AG04449 (cell line): ENCODE measurements at regions of chr17 and their contacts with region 1.

Region 1: GRCh38 chr17:28335201-28335955 is at the starts of genes IFT20 and TNFAIP1:
- DNase-seq: peak; percentile 100
- H3K4me3 ChIP-seq: peak within 1 kb of the TSS; percentile 83
- CTCF ChIP-seq: peak; percentile 4

Region 2: DNA sequence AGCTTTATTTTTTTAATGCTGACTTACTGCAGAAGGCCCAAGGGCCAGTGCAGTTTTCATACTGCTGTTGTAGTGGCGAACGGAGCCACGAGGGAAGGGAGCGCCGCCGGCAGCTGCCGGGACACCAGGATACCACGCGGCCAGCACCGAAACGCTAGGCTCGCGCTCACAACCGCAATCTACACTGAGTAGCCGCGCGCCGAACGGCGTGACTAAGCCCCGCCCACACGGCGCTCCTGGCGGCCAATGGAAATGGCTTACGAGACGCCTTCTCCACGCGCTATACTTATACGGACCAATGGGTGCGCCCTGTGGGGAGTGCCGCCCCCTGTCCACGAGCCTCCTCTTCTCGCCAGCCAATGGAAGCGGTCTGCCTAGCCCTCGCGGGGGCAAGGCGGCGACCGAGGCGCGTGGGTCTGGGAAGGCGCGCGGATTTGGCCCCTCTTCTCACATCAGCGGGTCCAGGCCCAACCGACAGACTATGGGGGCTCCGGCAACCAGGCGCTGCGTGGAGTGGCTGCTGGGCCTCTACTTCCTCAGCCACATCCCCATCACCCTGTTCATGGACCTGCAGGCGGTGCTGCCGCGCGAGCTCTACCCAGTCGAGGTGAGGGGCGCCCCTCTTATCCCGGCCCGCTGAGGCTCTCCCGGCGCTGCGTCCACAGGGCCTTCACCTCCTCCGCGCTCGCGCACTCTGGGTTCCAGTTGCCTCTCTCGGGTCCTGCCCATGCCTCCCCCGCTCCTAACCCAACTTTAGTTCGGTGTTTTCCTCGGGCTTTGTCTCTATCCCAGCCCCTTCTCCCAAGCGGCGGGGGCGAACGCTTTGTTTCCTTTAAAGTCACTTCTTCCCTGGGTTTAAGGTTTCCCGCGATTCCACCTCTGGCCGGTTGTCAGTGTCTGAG is 16.4 kb before region 1 on chr17 and contains the start of gene TMEM97:
- CTCF ChIA-PET with region 1: interaction called, 14 read pairs
- POLR2A ChIA-PET with region 1: interaction called, 3 read pairs
- DNase-seq: peak; percentile 78
- H3K4me3 ChIP-seq: peak within 1 kb of the TSS; percentile 82
- CTCF ChIP-seq: peak; percentile 9

Region 3: DNA sequence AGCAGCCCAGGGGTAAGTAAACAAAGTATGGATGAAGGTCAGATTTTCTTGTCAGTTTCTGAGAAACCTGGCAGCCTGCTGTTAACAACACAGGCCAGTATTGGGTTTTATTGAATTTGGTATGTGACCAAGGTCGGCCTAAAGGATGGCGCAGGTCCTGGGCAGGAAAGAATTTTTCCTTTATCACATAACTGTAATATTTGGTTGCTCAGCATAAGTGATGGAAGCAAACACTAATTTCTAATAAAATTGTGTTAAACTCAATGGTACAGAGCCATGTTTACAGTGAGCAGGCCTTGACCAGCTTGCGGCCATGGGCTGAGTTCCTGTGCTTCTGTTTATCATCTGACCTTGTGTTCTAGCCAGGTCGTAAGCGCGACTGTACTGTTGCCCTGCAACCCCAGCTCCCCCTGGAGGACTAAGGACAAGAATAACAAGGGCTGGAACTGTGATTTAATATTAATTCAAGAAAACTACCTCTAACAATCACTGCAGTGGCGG is 11.4 kb after region 1 on chr17:
- CTCF ChIA-PET with region 1: interaction called, 14 read pairs
- POLR2A ChIA-PET with region 1: interaction called, 55 read pairs
- DNase-seq: no peak
- H3K4me3 ChIP-seq: no peak overlapping the region
- CTCF ChIP-seq: peak; percentile 20

Region 4: DNA sequence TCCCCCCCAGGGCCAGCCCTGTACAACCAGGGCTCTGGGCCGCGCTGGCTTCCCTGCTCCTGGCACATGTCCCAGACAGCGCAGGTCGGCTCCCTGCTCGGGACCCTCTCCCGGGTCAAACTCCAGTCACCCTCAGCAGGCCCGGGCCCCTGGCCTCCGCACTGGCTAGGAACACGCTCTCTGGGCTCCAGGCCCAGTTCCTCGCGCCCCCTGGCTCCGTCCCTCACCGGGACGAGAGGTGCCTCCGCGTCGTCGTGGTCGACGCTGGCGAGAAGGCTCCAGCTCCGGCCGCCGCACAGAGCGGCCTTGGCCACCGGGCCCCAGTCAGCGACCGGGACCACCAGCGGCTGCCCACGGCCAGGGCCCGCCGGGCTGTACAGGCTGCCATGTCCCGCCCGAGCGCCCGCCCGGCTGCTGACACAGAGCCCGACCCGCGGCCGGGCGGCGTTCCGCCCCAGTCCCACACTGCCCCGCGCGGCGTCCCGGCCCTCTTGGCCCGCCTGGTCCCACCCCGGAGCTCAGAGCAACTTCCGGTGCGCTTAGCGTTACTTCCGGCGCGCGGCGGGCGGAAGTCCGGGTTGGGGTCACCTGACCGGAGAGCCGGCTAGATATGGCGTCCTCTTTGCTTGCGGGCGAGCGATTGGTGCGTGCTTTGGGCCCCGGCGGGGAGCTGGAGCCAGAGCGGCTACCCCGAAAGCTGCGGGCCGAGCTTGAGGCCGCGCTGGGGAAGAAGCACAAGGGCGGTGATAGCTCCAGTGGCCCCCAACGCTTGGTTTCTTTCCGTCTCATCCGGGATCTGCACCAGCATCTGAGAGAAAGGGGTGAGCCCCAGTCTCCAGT is 21.9 kb after region 1 on chr17 and contains the start of gene POLDIP2:
- CTCF ChIA-PET with region 1: interaction called, 7 read pairs
- POLR2A ChIA-PET with region 1: interaction called, 26 read pairs
- DNase-seq: peak; percentile 51
- H3K4me3 ChIP-seq: peak within 1 kb of the TSS; percentile 95
- CTCF ChIP-seq: no peak

Region 5: GRCh38 chr17:28407130-28407973 is 72.0 kb after region 1 on chr17:
- CTCF ChIA-PET with region 1: no interaction called
- POLR2A ChIA-PET with region 1: no interaction called
- DNase-seq: no peak
- H3K4me3 ChIP-seq: no peak overlapping the region
- CTCF ChIP-seq: no peak

Region 6: DNA sequence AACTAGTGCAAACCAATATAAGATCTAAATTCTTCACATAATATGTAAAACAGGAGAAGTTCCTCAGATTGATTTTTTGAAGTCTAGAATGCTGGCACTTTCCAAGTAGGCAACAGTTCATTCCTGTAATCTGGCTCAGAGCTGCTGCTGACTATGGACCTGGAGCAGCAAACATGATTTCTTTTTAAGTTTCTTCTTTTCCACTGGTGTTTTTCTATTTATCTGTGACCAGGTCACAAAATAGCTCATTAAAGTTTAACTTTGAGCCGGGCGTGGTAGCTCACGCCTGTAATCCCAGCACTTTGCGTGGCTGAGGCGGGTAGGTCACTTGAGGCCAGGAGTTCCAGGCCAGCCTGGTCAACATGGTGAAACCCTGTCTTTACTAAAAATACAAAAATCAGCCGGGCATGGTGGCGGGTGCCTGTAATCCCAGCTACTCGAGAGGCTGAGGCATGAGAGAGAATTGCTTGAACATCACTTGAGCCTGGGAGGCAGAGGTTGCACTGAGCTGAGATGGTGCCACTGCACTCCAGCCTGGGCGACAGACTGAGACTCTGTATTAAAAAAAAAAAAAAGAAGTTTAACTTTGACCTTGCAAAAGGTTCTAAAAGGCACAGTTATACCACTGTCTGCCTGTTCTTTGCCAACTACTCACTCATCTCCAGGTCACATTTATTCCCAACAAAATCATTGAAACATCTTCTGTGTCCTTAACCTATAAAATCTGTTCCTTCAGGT is 108.7 kb after region 1 on chr17:
- CTCF ChIA-PET with region 1: no interaction called
- POLR2A ChIA-PET with region 1: no interaction called
- DNase-seq: no peak
- H3K4me3 ChIP-seq: no peak overlapping the region
- CTCF ChIP-seq: no peak